ENCODE measurements at regions of chr12 and their contacts with region 1.

Region 1: DNA sequence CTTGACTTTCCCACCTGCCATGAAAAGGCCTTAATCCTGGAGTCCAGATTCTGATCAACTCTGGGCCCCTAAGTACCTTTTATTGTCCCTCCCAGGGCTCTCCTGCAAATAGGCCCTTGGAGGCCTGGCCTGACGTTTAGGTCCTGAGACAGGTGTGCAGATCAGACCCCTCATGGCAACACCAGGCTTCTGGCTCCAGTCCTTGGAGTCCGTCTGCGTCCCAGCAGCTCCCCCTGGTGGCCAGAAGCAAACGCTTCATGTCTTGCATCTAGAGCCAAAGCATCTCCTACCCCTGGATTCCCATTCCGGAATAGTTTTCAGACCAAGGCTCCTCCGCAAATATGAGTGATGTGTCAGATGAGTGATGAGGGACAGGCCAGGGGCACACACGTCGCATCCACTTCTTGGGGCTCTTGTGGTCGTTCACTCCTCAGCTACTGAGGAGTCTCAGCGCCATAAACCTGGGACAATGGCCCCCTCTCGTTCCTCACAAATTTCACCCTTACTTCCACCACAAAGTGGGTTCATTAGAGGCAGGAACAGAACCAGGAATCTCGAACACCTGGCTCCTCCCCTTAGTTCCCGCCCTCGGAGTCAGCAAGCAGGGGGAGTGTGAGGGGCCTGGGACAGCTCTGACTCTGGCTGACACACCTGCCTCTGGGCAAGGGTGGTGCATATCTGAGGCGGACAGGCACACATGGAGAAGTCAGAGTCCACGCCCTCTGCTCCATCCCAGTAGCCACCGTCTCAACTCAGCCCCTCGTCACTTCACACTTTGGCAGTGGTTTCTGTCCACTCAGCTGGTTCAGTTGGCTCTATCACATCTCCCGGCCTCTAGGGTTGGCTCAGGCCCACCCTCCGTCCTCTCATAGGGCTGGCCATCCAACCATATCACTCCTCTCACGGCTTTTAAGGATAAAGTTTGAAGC is 77.9 kb upstream of the PWP1 start:
- DNase-seq: peak; percentile 36
- ATAC-seq: peak; percentile 95
- H3K4me3 ChIP-seq: no peak overlapping the region
- H3K27ac ChIP-seq: no peak overlapping the region
- H3K4me1 ChIP-seq: no peaks in the 10 kb centered on the region
- H3K27me3 ChIP-seq: peaks cover 9% of the 10 kb centered on the region
- CTCF ChIP-seq: peak; percentile 92

Region 2: DNA sequence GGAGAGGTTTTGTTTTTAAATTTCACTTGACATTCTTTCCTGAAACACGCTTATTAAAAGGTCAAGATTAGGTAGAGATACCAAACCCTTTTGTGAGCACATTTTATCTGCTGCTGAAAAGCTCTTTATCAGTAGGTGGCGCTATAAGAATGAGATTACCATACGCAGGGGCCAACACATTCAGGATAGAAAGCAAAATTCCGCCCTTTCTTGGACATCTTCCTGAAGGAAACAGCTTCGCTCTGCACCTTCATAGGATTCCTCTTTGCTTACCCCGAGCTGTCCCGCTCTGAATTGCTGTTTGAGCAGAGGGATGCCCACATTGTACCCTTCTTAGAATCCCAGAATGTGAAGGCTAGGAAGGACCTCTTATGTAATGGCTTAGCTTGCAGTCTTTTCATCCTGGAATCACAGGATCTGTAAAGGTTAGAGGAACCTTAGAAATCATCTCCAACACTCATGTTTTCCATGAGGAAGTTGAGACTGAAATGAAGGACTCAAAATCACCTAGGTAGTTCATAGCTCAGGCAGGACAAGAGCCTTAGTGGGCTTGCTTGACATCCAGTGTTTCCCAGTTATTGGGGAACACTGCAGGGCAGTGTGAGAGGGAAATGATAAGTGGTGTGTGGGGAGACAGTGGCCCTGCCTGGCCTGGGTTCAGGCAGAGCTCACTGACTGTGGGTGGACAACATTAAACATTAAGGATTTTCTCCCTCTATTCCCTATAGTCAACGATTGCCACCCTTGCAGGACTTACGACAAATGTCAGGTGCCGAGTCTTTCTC is 475.7 kb before region 1 on chr12:
- CTCF ChIA-PET with region 1: interaction called, 4 read pairs
- POLR2A ChIA-PET with region 1: no interaction called
- in situ Hi-C with region 1: no loop called
- intact Hi-C with region 1: loop called (anchors 2 kb)
- DNase-seq: peak; percentile 25
- ATAC-seq: peak; percentile 82
- H3K4me3 ChIP-seq: no peak overlapping the region
- H3K27ac ChIP-seq: no peak overlapping the region
- H3K4me1 ChIP-seq: no peaks in the 10 kb centered on the region
- H3K27me3 ChIP-seq: no peaks in the 10 kb centered on the region
- CTCF ChIP-seq: peak; percentile 83

Region 3: DNA sequence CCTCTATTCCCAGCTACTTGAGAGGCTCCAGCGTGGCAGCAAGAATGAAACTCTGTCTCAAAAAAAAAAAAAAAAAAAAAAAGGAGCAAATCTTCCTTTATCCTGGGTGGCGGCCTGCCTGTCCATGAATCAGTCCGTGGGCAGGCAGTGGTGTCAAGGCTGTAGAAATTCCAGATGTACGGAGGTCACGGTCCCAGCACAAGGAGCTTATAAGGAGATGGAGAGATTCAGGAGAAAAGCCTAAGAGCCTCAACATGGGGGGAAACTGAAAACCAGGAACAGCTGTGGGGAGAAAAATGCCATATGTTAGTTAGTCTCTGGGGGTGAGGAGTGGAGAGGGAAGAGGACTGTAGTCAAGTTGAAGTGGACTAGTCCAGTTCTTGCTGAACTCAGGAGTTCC is 383.9 kb before region 1 on chr12:
- CTCF ChIA-PET with region 1: no interaction called
- POLR2A ChIA-PET with region 1: interaction called, 11 read pairs
- in situ Hi-C with region 1: no loop called
- intact Hi-C with region 1: no loop called
- DNase-seq: no peak
- ATAC-seq: no peak
- H3K4me3 ChIP-seq: no peak overlapping the region
- H3K27ac ChIP-seq: no peak overlapping the region
- H3K4me1 ChIP-seq: no peaks in the 10 kb centered on the region; the same call in 1 of the 2 replicates
- H3K27me3 ChIP-seq: peaks cover 13% of the 10 kb centered on the region
- CTCF ChIP-seq: no peak

Region 4: DNA sequence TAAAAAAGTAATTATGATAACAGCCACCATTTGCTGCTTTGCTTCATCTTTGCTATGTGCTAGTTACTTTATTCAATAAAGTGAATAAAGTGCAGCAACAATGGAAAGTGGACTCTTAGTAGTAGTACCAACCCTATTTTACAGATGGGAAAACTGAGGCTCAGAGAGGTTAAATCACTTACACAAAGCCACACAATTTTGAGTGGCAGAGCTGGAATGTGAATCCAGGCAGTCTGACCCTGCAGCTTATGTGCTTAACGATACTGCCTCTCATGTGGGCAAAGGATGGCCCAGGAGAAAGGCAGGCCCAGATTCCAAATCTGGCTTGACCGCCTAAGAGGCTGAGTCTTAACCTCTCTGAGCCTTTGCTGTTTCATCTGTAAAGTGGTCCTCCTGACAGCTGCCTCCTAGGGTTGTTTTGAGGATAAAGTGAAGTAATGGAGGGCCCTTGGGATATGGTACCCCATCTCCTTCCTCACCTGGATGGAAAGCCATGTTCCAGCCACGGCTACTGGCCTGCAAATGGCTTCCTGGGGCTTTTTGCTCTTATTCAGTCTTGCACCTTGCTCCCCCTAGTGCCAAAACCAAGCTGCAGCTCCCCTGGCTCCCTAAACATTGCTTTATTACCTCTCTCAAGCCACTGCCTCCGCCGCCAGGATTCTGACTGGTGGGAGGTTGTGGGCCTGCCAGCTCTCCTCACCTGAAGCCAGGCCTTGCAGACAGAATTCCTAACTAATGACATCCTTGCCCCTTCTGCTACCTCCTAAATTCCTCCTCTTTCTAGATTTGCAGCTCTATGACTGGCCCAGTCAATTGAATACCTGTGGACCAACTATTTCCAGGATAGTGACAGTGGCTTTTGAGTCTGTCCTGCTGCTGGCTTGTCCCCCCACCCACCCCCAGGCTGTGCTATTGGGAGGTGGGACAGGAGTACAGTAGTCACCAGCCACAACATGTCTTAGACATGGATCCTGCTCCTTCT is 205.4 kb before region 1 on chr12:
- CTCF ChIA-PET with region 1: no interaction called
- POLR2A ChIA-PET with region 1: no interaction called
- in situ Hi-C with region 1: no loop called
- intact Hi-C with region 1: loop called (anchors 5 kb)
- DNase-seq: no peak
- ATAC-seq: peak; percentile 88
- H3K4me3 ChIP-seq: no peak overlapping the region
- H3K27ac ChIP-seq: no peak overlapping the region
- H3K4me1 ChIP-seq: no peaks in the 10 kb centered on the region
- H3K27me3 ChIP-seq: no peaks in the 10 kb centered on the region; the same call in 1 of the 2 replicates
- CTCF ChIP-seq: peak; percentile 80

Region 5: GRCh38 chr12:107444771-107445170 is 163.0 kb before region 1 on chr12:
- CTCF ChIA-PET with region 1: no interaction called
- POLR2A ChIA-PET with region 1: no interaction called
- in situ Hi-C with region 1: no loop called
- intact Hi-C with region 1: loop called (anchors 2 kb)
- DNase-seq: no peak
- ATAC-seq: no peak
- H3K4me3 ChIP-seq: no peak overlapping the region
- H3K27ac ChIP-seq: no peak overlapping the region
- H3K4me1 ChIP-seq: no peaks in the 10 kb centered on the region
- H3K27me3 ChIP-seq: no peaks in the 10 kb centered on the region
- CTCF ChIP-seq: no peak

Region 6: DNA sequence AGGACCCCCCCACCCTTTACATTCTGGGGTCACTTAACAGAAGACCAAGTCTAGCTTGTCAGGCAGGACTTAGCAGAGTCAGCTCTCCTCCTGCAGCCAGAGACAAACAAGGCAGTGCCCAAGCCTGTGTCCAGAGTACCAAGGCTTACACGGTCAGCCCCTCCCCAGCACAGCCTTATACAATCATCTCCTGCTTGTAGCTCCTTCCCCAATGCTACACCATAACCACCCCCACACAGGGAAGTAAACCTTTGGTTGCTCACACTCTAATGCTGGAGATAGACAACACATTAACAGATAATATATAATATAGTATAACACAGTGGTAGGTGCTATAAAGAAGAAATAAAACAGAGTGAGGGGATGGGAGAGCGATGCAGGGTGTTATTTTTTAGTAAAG is 97.5 kb before region 1 on chr12:
- CTCF ChIA-PET with region 1: interaction called, 12 read pairs
- POLR2A ChIA-PET with region 1: no interaction called
- in situ Hi-C with region 1: no loop called
- intact Hi-C with region 1: no loop called
- DNase-seq: no peak
- ATAC-seq: no peak
- H3K4me3 ChIP-seq: no peak overlapping the region
- H3K27ac ChIP-seq: no peak overlapping the region
- H3K4me1 ChIP-seq: no peaks in the 10 kb centered on the region
- H3K27me3 ChIP-seq: no peaks in the 10 kb centered on the region; the same call in 1 of the 2 replicates
- CTCF ChIP-seq: no peak